ENCODE measurements at regions of chr11 and their contacts with region 1.

Region 1: GRCh38 chr11:85826116-85826855 is 15.3 kb upstream of the SYTL2 start:
- DNase-seq: no peak
- ATAC-seq: peak; percentile 44

Region 2: DNA sequence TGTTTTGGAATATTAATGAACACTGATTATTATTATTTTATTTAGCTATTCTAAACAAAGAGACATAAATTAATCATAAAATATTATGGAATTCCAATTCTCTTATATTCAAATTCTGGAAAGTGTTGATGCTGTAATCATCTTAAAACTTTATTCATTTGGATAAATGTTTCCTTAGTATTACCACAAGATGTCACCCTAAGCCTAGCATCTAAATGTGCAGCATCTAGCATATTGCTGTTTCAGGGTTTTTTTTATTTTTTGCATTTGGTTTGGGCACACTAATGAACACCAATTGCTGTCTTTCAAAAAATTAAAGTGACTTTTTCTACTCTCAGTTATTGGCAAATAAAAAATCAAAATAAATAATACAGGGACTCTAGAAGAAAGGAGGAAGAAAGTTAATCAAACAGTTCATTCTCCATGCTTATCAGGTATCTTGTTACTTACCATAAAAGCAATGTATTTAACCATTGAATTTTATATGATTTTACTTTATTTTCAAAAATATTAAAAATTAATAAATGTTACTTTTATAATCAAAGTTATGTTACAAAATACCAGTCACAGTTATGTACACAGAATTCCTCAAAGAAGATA is 230.9 kb before region 1 on chr11:
- intact Hi-C with region 1: loop called (anchors 5 kb)
- DNase-seq: no peak
- ATAC-seq: peak; percentile 54

Region 3: DNA sequence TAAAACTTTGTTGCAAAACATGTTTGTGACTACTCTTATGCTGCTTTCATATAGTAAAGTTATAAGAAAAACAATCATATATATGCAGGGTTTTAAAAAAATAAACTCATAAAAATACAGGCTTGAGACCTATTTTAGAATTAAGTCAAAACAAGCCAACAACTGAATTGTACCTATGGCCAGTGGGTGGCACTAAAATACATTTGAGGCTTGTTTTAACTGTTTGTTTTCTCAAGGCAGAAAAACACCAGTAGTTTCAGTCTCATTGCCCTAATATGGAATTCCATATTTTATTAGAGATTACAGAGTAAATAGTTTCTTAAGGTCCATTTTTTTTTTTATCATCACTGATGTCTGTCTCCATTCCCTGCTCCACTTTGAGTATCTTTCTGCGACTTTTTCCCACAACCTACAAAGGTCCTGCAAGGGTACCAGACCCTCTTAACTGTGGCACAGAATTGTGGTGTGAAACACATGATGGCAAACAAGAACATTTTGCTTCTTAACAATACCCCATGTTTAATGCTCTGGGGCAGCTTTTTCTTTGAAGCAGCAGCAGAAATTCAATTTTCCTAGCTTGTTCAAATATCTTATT is 131.8 kb before region 1 on chr11:
- intact Hi-C with region 1: loop called (anchors 5 kb)
- DNase-seq: no peak
- ATAC-seq: no peak

Measured in Right ventricle myocardium inferior (tissue), 1 donor.